ENCODE measurements at regions of chr15 and their contacts with region 1.

Region 1: DNA sequence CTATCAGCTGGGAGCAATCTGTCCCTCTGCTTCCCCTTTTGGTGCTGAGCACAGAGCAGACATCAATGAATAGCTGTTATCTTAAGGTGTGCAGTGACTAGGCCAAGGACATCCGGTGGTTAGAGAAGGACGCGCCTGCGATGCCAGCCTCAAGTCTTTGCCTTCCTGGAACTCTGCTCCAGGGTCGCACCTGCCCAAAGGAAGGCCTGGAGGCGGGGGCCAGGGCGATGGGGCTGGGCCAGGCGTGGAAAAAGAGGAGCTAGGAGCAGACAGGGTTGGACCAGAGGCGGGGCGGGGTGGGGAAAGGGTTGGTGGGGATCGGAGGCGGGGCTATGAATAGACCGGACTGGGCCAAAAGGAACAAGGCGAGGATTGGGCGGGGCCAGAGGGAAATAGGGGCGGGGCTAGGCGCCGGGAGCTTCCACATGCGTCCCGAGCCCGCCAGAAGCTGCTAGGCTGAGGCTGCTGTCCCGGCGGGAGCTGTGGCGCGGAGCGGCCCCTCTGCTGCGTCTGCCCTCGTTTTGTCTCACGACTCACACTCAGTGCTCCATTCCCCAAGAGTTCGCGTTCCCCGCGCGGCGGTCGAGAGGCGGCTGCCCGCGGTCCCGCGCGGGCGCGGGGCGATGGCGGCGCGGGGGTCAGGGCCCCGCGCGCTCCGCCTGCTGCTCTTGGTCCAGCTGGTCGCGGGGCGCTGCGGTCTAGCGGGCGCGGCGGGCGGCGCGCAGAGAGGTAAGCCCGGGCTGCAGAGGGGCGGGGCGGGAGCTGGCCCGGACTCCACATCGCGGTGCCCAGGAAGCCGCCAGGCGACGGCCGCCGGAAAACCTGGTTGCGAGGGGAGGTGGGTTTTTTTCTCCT is at the start of gene CHRNA5:
- DNase-seq: peak; percentile 41
- ATAC-seq: peak; percentile 79
- H3K4me3 Mint-ChIP-seq: peak within 1 kb of the TSS; percentile 82
- H3K27ac Mint-ChIP-seq: peak within 1 kb of the TSS; percentile 75
- H3K4me1 Mint-ChIP-seq: peaks cover 21% of the 10 kb centered on the region
- H3K27me3 Mint-ChIP-seq: peaks cover 27% of the 10 kb centered on the region
- total RNA-seq, gene CHRNA5: 2.1 to 2.7 TPM

Region 2: GRCh38 chr15:78317145-78317836 is 248.0 kb before region 1 on chr15:
- CTCF ChIA-PET with region 1: no interaction called
- POLR2A ChIA-PET with region 1: no interaction called
- DNase-seq: no peak
- ATAC-seq: no peak
- H3K4me3 Mint-ChIP-seq: no peak overlapping the region
- H3K27ac Mint-ChIP-seq: no peak overlapping the region
- H3K4me1 Mint-ChIP-seq: no peaks in the 10 kb centered on the region
- H3K27me3 Mint-ChIP-seq: no peaks in the 10 kb centered on the region

Region 3: DNA sequence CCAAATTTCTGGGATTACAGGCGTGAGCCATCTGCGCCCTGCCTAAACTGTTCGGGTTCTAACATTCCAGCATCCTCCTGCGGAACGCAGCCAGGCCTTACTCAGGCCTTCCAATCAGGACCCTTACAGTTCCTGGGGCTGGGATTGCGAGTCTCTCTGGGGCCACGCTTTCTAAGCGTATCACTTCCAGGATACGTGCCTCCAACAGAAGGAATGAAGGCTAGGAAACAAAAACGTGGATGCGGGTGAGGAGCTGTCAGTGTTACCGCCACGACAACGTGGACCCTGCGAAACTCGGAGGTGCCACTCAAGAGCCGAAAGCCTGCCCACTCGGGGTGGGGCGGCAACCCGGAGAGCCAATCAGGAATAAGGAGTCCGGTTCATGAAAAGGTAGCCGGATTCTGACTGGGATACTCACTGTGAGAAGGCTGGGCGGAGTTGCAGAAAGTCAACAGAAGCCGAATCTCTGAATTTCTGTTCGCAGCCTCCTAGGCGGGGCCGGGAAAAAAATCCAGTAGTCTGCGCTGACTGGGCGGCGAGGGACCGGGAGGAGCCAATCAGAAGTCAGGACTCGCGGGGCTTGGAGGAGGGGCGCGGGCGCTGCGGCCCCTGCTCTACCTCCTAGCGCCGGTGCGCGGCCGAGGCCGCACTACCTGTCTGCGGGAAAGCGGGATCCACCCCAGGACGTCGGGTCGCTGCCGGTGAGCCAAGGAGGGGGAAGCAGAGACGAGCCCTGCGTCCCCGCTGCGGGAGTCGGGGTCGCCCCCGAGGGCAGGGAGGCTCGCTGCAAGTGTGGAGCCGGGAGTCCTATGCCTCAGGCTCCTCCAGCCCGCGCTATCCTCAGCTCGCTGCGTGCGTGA is 58.1 kb before region 1 on chr15 and contains the start of gene HYKK:
- CTCF ChIA-PET with region 1: no interaction called
- POLR2A ChIA-PET with region 1: no interaction called
- DNase-seq: peak; percentile 83
- ATAC-seq: peak; percentile 96
- H3K4me3 Mint-ChIP-seq: peak within 1 kb of the TSS; percentile 77
- H3K27ac Mint-ChIP-seq: peak within 1 kb of the TSS; percentile 56
- H3K4me1 Mint-ChIP-seq: peaks cover 22% of the 10 kb centered on the region
- H3K27me3 Mint-ChIP-seq: peaks cover 11% of the 10 kb centered on the region
- total RNA-seq, gene HYKK: 1.1 to 1.5 TPM

Region 4: GRCh38 chr15:78540141-78540928 is 25.0 kb before region 1 on chr15 and contains the start of gene PSMA4:
- CTCF ChIA-PET with region 1: interaction called, 8 read pairs
- POLR2A ChIA-PET with region 1: interaction called, 20 read pairs
- DNase-seq: peak; percentile 95
- ATAC-seq: peak; percentile 85
- H3K4me3 Mint-ChIP-seq: peak within 1 kb of the TSS; percentile 90
- H3K27ac Mint-ChIP-seq: peak within 1 kb of the TSS; percentile 91
- H3K4me1 Mint-ChIP-seq: peaks cover 34% of the 10 kb centered on the region
- H3K27me3 Mint-ChIP-seq: no peaks in the 10 kb centered on the region
- total RNA-seq, gene PSMA4: 252 to 260 TPM

Region 5: DNA sequence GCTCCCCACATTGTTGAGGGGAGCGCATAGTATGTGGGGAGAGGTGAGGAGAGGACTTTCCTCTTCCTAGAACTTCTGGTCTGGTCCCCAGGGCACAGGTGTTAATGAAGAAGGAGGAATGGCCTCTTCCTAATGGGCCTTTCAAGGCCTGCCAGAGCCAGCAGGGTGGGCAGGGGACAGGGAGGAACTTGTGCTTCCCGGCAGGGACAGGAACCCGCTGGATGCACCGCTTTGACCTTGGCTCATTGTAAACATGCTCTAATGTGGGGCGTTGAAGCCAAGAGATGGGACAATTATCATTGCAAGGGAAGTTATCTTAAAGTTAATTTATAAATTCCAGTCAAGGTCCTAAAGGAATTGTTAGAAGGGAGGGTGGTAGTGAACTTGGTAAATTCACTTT is 96.7 kb after region 1 on chr15:
- CTCF ChIA-PET with region 1: no interaction called
- POLR2A ChIA-PET with region 1: no interaction called
- DNase-seq: no peak
- ATAC-seq: no peak
- H3K4me3 Mint-ChIP-seq: no peak overlapping the region
- H3K27ac Mint-ChIP-seq: no peak overlapping the region
- H3K4me1 Mint-ChIP-seq: no peaks in the 10 kb centered on the region
- H3K27me3 Mint-ChIP-seq: peaks cover 8% of the 10 kb centered on the region

Measured in activated CD8-positive, alpha-beta T cell treated with anti-CD3 and anti-CD28 coated beads, Interleukin-2, amount 10 ng/mL, durations not matched to agents 7 days and 5 days (primary cell).